Mucosa of descending colon (tissue), 3 donors: ENCODE measurements at regions of chr12 and their contacts with region 1.

Region 1: DNA sequence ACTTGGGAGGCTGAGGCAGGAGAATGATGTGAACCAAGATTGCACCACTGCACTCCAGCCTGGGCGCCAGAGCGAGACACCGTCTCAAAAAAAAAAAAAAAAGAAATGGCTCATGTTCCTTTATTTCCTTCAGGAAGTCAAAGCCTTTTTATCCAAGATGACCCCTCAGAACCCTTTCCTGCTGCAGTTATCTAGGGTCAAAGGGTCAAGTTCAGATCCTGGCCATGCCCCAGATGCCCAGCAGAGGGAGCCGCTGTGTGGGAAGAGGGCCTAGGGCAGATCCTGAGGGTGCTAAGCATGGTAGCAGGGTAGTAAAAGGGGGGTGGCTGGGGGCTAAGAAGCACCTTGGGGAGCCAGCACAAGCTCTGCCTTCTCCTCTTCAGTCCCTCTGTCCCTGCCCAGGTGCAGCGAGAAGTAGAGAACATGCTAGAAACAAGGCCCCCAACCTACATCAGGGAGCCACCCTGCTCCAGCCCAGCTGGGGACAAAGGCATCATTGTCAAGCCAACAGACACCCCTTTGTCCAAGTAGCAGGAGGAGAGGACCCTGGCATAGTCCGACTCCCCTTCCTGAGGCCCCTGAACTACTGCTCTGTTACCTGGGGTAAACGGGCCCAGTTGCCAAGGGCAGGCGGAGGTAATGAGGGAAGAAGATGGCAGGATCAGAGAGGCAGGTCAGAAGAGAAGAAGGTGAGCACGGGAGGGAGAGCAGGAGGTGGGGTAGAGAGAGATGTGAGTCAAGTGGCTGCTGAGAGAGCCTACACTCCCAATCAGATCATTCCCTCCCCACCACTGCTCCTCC is 6.5 kb downstream of the NFE2 start:
- DNase-seq: peak; percentile 74 to 88 (median 82)
- ATAC-seq: peak; percentile 93
- H3K4me3 ChIP-seq: no peak overlapping the region
- H3K4me1 ChIP-seq: no peaks in the 10 kb centered on the region
- CTCF ChIP-seq: peak; percentile 59

Region 2: GRCh38 chr12:54360717-54361456 is 66.5 kb after region 1 on chr12:
- intact Hi-C with region 1: loop called in 1 of 2 experiments (anchors 5 kb)
- DNase-seq: peak in 2 of 3 donors; percentile 86 to 94
- ATAC-seq: peak; percentile 30
- H3K4me3 ChIP-seq: no peak overlapping the region
- H3K4me1 ChIP-seq: no peaks in the 10 kb centered on the region
- CTCF ChIP-seq: peak; percentile 54

Region 3: DNA sequence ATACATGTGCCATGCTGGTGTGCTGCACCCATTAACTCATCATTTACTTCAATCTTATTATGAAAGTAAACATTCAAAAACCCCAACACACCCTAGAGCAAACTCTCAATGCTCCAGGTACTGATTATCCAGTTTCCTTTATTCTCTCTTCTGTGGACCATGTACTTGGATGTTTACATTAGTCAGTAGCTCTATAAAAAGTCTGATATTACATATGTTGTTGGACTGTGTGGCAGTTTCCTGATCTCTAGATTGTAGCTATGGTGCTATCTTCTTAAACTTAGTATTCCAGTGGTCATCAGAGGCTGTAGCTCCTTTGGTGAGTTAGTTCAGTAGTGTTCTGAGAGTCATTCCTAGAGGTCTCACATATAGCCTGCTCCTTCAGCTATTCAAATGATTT is 149.9 kb after region 1 on chr12:
- intact Hi-C with region 1: no loop called
- DNase-seq: no peak
- ATAC-seq: peak; percentile 73
- H3K4me3 ChIP-seq: no peak overlapping the region
- H3K4me1 ChIP-seq: peaks cover 6% of the 10 kb centered on the region
- CTCF ChIP-seq: no peak